A549 (cell line): ENCODE measurements at regions of chr20 and their contacts with region 1.

Region 1: DNA sequence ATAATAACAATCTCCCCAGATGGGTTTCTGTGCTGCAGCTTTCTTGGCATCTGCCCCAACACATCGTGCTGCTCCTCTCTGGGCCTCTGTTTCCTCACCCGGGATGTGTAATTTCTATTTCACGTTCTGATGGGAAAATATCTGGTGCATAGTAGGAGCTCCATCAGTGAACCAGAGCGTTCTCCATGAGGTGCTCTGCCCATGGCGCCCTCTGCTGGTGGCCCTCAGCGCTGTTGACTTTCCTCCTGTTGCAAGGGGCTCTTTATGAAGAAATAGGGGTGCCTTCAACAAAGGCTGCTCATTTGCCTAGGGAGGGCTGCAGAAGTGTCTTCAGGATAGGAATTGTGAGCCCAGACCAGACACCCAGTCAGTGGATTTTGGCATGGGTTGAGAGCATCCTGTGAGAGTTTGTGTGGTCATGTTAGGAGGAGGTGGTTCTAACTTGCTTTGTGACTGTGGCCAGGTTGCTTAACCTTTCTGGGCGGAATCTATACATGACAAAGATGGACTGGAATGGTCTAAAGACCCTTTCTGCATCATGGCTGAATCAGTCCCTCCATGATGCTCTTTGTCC is 8.1 kb downstream of the SCRT2 start:
- DNase-seq: peak; percentile 69 to 80
- ATAC-seq: peak in 1 of 2 experiments; percentile 78; a peak in 3 of 6 replicates
- H3K4me3 ChIP-seq: no peak overlapping the region
- H3K27ac ChIP-seq: 0 out of 6 replicates have a peak overlapping the region, but pooled peaks of 1 of the 2 experiments have one; percentile 6
- H3K4me1 ChIP-seq: peaks cover 28% of the 10 kb centered on the region; the same call in 2 of the 3 replicates
- CTCF ChIP-seq: peak; percentile 90
- EP300 ChIP-seq: no peak
- POLR2A ChIP-seq: no peak
- RAD21 ChIP-seq: peak; percentile 57 to 71

Region 2: DNA sequence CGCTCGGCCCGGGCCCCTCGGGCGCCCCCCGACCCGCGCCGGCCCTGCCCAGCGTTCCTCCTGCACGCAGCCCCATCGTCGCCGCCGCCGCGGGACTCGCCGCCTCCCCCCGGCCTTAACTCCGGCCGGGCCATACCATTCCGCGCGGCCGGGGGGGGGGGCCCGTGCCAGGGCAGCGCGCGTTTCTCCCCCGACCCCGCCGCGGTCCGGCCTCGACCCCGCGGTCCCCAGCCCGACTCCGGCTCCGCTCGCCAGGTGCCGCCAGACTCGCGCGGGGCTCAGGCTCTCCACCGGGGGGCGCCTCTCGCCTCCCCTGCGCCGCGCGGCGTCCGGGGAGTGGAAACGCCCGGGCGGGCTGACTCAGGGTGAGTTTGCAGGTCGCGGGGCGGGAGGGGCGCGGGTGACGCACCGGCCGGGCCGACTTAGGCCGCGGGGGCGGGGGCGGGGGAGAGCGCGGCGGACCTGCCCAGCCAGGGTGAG is 14.3 kb before region 1 on chr20 and contains the start of gene SRXN1:
- CTCF ChIA-PET with region 1: interaction called, 60 read pairs
- POLR2A ChIA-PET with region 1: interaction called, 4 read pairs
- DNase-seq: peak; percentile 93 to 98
- ATAC-seq: peak; percentile 83 to 86
- H3K4me3 ChIP-seq: peak within 1 kb of the TSS; percentile 87
- H3K27ac ChIP-seq: peak within 1 kb of the TSS; percentile 98
- H3K4me1 ChIP-seq: peaks cover 29% of the 10 kb centered on the region
- CTCF ChIP-seq: peak; percentile 93
- EP300 ChIP-seq: peak; percentile 52 to 81; a peak in 3 of 5 replicates
- POLR2A ChIP-seq: peak; percentile 93
- RAD21 ChIP-seq: peak; percentile 58 to 80
- polyA plus RNA-seq, gene SRXN1: 262 and 302 TPM in 2 replicates

Region 3: GRCh38 chr20:682123-682522 is 14.6 kb after region 1 on chr20:
- CTCF ChIA-PET with region 1: interaction called, 31 read pairs
- POLR2A ChIA-PET with region 1: no interaction called
- DNase-seq: no peak
- ATAC-seq: no peak
- H3K4me3 ChIP-seq: no peak overlapping the region
- H3K27ac ChIP-seq: no peak overlapping the region
- H3K4me1 ChIP-seq: 0 out of 3 replicates have a peak, but pooled peaks cover 3% of the 10 kb centered on the region
- CTCF ChIP-seq: no peak
- EP300 ChIP-seq: no peak
- POLR2A ChIP-seq: no peak
- RAD21 ChIP-seq: no peak

Region 4: GRCh38 chr20:787825-788224 is 120.3 kb after region 1 on chr20:
- CTCF ChIA-PET with region 1: no interaction called
- POLR2A ChIA-PET with region 1: no interaction called
- DNase-seq: no peak
- ATAC-seq: no peak
- H3K4me3 ChIP-seq: no peak overlapping the region
- H3K27ac ChIP-seq: no peak overlapping the region
- H3K4me1 ChIP-seq: no peaks in the 10 kb centered on the region
- CTCF ChIP-seq: no peak
- EP300 ChIP-seq: no peak
- POLR2A ChIP-seq: no peak
- RAD21 ChIP-seq: no peak